Esophagus squamous epithelium (tissue), 5 donors: ENCODE measurements at regions of chr17 and their contacts with region 1.

Region 1: DNA sequence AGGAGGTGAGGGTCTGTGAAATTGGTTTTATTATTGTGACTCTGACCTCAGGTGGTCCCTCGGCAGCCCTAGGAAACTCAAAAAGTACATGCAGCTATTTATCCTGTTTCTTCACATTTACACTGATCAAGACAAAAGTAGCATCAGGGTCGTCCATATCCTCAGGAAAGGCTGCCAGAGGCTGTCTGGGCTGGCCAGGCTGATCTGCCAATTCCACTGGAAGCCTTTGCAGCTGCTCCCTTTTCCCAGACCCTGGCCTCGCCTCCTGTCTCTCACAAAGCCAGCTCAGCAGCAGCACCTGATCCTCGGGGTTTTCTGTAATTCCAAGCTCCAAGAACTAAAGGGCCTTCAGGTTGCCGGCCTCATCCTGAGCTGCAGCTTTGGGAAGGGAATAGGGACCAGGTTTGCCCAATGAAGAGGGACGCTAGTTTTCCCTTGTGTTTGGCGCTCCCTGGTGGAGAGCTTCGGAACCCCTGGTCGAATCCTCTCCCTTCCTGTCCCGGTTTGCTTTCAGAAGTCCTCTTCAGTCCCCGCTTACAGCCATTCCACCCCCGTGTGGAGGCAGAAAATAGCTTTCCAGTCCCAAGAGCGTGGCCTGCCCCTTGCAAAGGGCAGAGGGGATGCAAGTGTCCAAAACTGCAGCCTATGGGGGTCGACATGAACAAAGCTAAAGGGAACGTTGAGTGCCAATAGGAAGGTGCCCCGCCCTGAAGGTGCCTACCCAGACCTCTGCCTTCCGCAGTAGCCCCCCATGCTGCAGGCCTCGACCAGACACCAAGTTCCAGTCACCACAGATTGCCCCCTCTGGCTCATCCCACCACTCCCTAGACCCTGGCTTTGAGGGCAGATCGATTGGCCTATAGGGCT is 13.4 kb downstream of the MFSD6L start:
- DNase-seq: no peak
- H3K4me3 ChIP-seq: no peak overlapping the region
- H3K27ac ChIP-seq: no peak overlapping the region
- H3K4me1 ChIP-seq: peaks cover 0 to 7% (median 6%) of the 10 kb centered on the region in 3 donors
- H3K27me3 ChIP-seq: no peaks in the 10 kb centered on the region
- CTCF ChIP-seq: peak; percentile 61 to 83 (median 73)
- POLR2A ChIP-seq: no peak

Region 2: GRCh38 chr17:8409966-8410864 is 375.6 kb before region 1 on chr17:
- intact Hi-C with region 1: loop called (anchors 5 kb)
- DNase-seq: no peak
- H3K4me3 ChIP-seq: peak overlapping the region in 3 of 4 donors; percentile 22 to 43 (median 26)
- H3K27ac ChIP-seq: peak overlapping the region; percentile 63 to 79 (median 72)
- H3K4me1 ChIP-seq: peaks cover 3 to 22% (median 11%) of the 10 kb centered on the region in 3 donors
- H3K27me3 ChIP-seq: no peaks in the 10 kb centered on the region
- CTCF ChIP-seq: peak; percentile 84 to 90 (median 88)
- POLR2A ChIP-seq: no peak